Mammary epithelial cell (primary cell): ENCODE measurements at regions of chr12 and their contacts with region 1.

Region 1: GRCh38 chr12:132798836-132799235 is 29.8 kb downstream of the GOLGA3 start:
- DNase-seq: no peak
- H3K4me3 ChIP-seq: no peak overlapping the region
- H3K27ac ChIP-seq: no peak overlapping the region
- H3K4me1 ChIP-seq: peaks cover 4% of the 10 kb centered on the region
- H3K27me3 ChIP-seq: no peaks in the 10 kb centered on the region
- CTCF ChIP-seq: no peak

Region 2: GRCh38 chr12:132686825-132687207 is 112.0 kb before region 1 on chr12:
- CTCF ChIA-PET with region 1: no interaction called
- dilution Hi-C with region 1: no loop called
- in situ Hi-C with region 1: no loop called
- intact Hi-C with region 1: no loop called
- DNase-seq: no peak
- H3K4me3 ChIP-seq: peak overlapping the region; percentile 51 to 68 (median 67)
- H3K27ac ChIP-seq: peak overlapping the region; percentile 70
- H3K4me1 ChIP-seq: peaks cover 9% of the 10 kb centered on the region
- H3K27me3 ChIP-seq: no peaks in the 10 kb centered on the region
- CTCF ChIP-seq: no peak

Region 3: DNA sequence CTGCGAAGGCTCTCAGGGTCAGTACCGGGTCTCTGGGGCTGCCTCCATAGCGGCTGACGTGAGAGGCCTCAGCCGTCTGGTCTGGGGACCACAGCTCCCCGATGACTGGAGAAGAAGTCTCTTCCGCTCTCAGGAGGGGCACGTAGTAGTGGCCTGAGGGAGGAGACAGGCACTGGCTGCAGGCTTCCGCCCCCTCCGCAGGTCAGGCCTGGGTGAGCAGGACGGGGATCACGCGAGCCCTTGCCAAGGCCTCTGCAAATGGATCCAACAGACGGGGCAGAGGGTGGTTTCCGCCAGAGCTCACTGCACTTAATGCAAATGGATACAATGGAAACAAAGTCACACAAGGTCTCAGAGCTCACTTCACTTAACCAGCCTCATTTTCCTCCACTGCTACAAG is 61.9 kb before region 1 on chr12:
- CTCF ChIA-PET with region 1: no interaction called
- dilution Hi-C with region 1: loop called (anchors 5 kb)
- in situ Hi-C with region 1: no loop called
- intact Hi-C with region 1: no loop called
- DNase-seq: no peak
- H3K4me3 ChIP-seq: no peak overlapping the region
- H3K27ac ChIP-seq: no peak overlapping the region
- H3K4me1 ChIP-seq: no peaks in the 10 kb centered on the region
- H3K27me3 ChIP-seq: no peaks in the 10 kb centered on the region
- CTCF ChIP-seq: no peak

Region 4: DNA sequence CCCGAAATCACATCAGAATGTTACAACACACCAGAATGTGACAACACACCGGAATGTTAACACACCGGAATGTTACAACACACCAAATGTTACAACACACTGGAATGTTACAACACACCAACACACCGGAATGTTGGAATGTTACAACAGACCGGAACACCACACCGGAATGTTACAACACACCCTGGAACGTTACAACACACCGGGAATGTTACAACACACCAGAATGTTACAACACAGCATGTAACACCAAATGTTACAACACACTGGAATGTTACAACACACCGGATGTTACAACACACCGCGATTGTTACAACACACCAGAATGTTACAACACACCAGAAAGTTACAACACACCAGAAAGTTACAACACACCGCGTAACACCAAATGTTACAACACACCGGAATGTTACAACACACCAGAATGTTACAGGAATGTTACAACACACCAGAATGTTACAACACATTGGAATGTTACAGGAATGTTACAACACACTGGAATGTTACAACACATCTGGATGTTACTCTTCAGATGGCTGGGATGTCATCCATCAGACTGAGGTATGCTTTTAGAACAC is 67.5 kb after region 1 on chr12:
- CTCF ChIA-PET with region 1: no interaction called
- dilution Hi-C with region 1: no loop called
- in situ Hi-C with region 1: no loop called
- intact Hi-C with region 1: no loop called
- DNase-seq: peak; percentile 68
- H3K4me3 ChIP-seq: no peak overlapping the region
- H3K27ac ChIP-seq: no peak overlapping the region
- H3K4me1 ChIP-seq: no peaks in the 10 kb centered on the region
- H3K27me3 ChIP-seq: no peaks in the 10 kb centered on the region
- CTCF ChIP-seq: no peak